Heart right ventricle (tissue), 16 donors: ENCODE measurements at regions of chr12 and their contacts with region 1.

Region 1: GRCh38 chr12:117836999-117837736 is 131.6 kb downstream of the KSR2 start:
- DNase-seq: peak; percentile 56 to 75
- ATAC-seq: peak; percentile 29 to 73 (median 59)
- H3K4me3 ChIP-seq: no peak overlapping the region
- H3K27ac ChIP-seq: no peak overlapping the region
- H3K4me1 ChIP-seq: peaks cover 0 to 3% (median 0%) of the 10 kb centered on the region in 9 donors
- H3K27me3 ChIP-seq: peaks cover 0 to 83% (median 56%) of the 10 kb centered on the region in 7 donors
- CTCF ChIP-seq: peak; percentile 84 to 97 (median 94)

Region 2: DNA sequence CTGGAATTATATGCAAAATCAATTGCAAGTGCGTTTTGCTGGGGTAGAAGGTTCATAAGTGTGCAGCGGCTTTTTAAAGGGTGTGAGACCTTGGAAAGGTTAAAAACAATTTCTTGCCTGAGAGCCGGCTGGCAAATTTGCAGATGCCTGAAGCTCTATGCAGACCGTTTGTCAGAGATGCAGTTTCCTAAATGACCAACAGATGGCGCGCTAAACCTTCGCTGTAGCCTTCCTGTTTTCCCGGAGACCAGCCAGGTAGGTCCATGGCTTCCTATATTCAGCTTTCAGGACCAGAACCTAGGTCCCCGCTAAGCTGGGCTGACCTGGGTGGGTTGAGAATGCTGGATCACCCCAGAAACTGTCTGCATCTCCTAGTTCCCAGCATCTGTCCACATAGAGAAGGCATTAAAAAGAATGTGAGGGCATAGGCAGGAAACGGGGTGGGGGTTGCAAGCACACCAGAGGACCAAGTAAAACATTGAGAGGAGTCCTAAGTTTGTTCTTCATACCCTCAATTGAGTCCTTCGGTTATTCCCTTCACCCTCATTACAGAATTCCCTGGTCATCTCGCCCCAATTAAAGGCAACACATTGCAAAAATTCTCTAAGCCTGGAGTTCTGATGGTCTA is 470.0 kb before region 1 on chr12:
- intact Hi-C with region 1: loop called (anchors 1 to 5 kb)
- DNase-seq: peak in 1 of 2 donors; percentile 66
- ATAC-seq: peak in 6 of 8 donors; percentile 36 to 73 (median 55)
- H3K4me3 ChIP-seq: no peak overlapping the region
- H3K27ac ChIP-seq: no peak overlapping the region
- H3K4me1 ChIP-seq: no peaks in the 10 kb centered on the region
- H3K27me3 ChIP-seq: peaks cover 0 to 58% (median 42%) of the 10 kb centered on the region in 7 donors
- CTCF ChIP-seq: peak; percentile 77 to 93 (median 87)

Region 3: GRCh38 chr12:117587631-117588287 is 249.4 kb before region 1 on chr12:
- intact Hi-C with region 1: loop called in 3 of 10 experiments (anchors 5 to 10 kb)
- DNase-seq: peak; percentile 18 to 36
- ATAC-seq: peak in 5 of 8 donors; percentile 38 to 73 (median 67)
- H3K4me3 ChIP-seq: no peak overlapping the region
- H3K27ac ChIP-seq: no peak overlapping the region
- H3K4me1 ChIP-seq: no peaks in the 10 kb centered on the region
- H3K27me3 ChIP-seq: peaks cover 0 to 54% (median 37%) of the 10 kb centered on the region in 7 donors
- CTCF ChIP-seq: peak; percentile 62 to 88 (median 81)

Region 4: DNA sequence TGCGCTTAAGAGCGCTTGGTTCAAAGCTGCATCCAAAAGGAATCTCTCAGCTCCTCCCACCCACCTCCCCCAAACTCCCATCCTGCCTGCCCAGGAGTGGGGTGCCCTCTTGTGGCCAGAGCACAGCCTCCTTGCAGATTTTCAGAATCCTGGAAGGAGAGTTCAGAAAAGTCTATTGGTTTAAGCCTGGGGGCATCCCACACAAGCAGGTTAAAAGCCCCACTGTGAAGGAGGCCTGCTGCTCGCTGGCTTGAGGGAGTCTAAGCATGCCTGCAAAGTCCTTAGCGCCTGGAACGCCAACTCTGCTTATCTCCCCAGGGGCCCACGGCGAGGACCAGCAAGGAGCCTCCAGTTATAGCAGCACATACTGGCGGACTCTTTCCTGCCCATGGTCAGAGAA is 165.4 kb before region 1 on chr12:
- intact Hi-C with region 1: loop called in 1 of 10 experiments (anchors 10 kb)
- DNase-seq: no peak
- ATAC-seq: no peak
- H3K4me3 ChIP-seq: no peak overlapping the region
- H3K27ac ChIP-seq: no peak overlapping the region
- H3K4me1 ChIP-seq: no peaks in the 10 kb centered on the region
- H3K27me3 ChIP-seq: peaks cover 0 to 32% (median 17%) of the 10 kb centered on the region in 7 donors
- CTCF ChIP-seq: peak in 7 of 9 donors; percentile 29 to 51 (median 41)

Region 5: GRCh38 chr12:117733290-117733805 is 103.8 kb before region 1 on chr12:
- intact Hi-C with region 1: no loop called
- DNase-seq: no peak
- ATAC-seq: no peak
- H3K4me3 ChIP-seq: no peak overlapping the region
- H3K27ac ChIP-seq: no peak overlapping the region
- H3K4me1 ChIP-seq: no peaks in the 10 kb centered on the region
- H3K27me3 ChIP-seq: no peaks in the 10 kb centered on the region
- CTCF ChIP-seq: no peak

Region 6: GRCh38 chr12:118016424-118017264 is 179.5 kb after region 1 on chr12 and contains the start of gene RFC5:
- intact Hi-C with region 1: no loop called
- DNase-seq: peak; percentile 98 to 99
- ATAC-seq: peak; percentile 99 to 100 (median 100)
- H3K4me3 ChIP-seq: peak within 1 kb of the TSS; percentile 75 to 98 (median 93)
- H3K27ac ChIP-seq: peak within 1 kb of the TSS in 6 of 10 donors; percentile 51 to 85 (median 68)
- H3K4me1 ChIP-seq: peaks cover 0 to 17% (median 9%) of the 10 kb centered on the region in 9 donors
- H3K27me3 ChIP-seq: no peaks in the 10 kb centered on the region
- CTCF ChIP-seq: peak in 1 of 9 donors; percentile 13
- total RNA-seq, gene RFC5: 2.8 to 6.2 (median 4.1) TPM

Region 7: GRCh38 chr12:119399301-119399700 is 1562.1 kb after region 1 on chr12:
- intact Hi-C with region 1: no loop called
- DNase-seq: no peak
- ATAC-seq: peak in 1 of 8 donors; percentile 25
- H3K4me3 ChIP-seq: no peak overlapping the region
- H3K27ac ChIP-seq: no peak overlapping the region
- H3K4me1 ChIP-seq: no peaks in the 10 kb centered on the region
- H3K27me3 ChIP-seq: no peaks in the 10 kb centered on the region
- CTCF ChIP-seq: no peak